ENCODE measurements at regions of chr6 and their contacts with region 1.

Region 1: GRCh38 chr6:148658701-148659100 is 88.1 kb upstream of the UST start:
- DNase-seq: no peak
- H3K4me3 ChIP-seq: no peak overlapping the region
- H3K27ac ChIP-seq: peak overlapping the region; percentile 56 to 83
- H3K4me1 ChIP-seq: peaks cover 0 to 8% of the 10 kb centered on the region in 2 donors
- H3K27me3 ChIP-seq: no peaks in the 10 kb centered on the region
- CTCF ChIP-seq: no peak

Region 2: GRCh38 chr6:148175550-148176188 is 483.0 kb before region 1 on chr6:
- intact Hi-C with region 1: no loop called
- DNase-seq: no peak
- H3K4me3 ChIP-seq: no peak overlapping the region
- H3K27ac ChIP-seq: no peak overlapping the region
- H3K4me1 ChIP-seq: no peaks in the 10 kb centered on the region
- H3K27me3 ChIP-seq: no peaks in the 10 kb centered on the region
- CTCF ChIP-seq: no peak

Region 3: DNA sequence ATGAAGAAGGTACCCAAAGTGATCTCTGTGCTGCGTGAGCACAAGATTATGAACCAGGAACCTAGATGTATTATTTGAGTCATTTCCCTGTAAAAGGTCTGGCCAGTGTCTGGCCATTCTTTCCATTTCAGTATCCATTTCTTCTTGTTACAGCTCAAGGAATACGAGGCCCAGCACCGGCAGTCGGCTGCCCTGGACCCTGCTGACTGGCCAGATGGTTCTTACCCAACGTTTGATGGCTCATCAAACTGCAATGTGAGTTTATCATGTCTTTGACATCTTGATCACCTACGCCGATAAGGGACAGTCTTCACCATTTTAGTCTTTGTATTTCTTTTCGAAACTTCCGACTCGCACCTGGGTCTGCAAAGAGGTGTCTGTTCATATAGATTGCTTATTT is 171.2 kb before region 1 on chr6:
- intact Hi-C with region 1: no loop called
- DNase-seq: no peak
- H3K4me3 ChIP-seq: no peak overlapping the region
- H3K27ac ChIP-seq: no peak overlapping the region
- H3K4me1 ChIP-seq: peaks cover 0 to 6% of the 10 kb centered on the region in 2 donors
- H3K27me3 ChIP-seq: no peaks in the 10 kb centered on the region
- CTCF ChIP-seq: no peak

Region 4: DNA sequence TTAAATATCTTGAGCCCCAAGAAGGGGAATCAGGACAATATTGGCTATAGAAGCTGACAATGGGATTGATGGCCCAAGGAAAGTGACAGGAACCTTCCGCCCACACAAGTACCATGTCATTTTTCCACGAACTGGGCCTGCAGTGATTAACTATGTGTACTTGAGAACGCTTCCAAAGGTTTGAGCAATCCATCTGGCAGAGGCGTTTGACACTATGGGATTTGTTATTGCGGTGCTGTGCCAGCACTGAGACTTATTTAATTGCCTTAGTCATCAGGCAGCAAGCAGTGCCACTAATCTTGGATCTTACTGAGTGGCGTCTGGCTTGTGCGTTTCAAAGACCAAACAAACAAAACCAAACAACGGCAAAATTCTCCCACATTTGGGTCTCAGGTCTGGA is 47.5 kb before region 1 on chr6:
- intact Hi-C with region 1: loop called (anchors 2 kb)
- DNase-seq: peak; percentile 46 to 94
- H3K4me3 ChIP-seq: peak overlapping the region in 1 of 2 donors; percentile 26
- H3K27ac ChIP-seq: peak overlapping the region; percentile 78 to 88
- H3K4me1 ChIP-seq: peaks cover 9 to 16% of the 10 kb centered on the region in 2 donors
- H3K27me3 ChIP-seq: no peaks in the 10 kb centered on the region
- CTCF ChIP-seq: no peak

Region 5: DNA sequence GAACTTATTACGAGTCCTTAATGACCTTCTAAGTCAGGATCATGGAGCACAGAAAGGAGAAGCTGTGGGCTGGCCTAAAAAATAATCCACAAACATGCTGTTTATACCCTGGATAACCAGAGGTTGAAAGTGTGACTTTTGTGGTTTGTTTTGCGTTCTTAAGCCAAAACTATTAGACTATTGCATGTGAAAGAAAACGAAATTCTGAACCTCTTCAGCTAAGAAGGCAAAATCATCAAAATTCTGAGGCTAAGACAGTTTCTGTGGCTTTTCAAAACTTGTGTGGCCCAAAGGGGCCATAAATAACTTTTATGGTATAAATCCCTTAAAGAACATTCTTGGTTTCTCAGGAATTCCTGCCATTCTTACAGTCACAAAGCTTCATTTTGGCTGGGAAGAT is 339.2 kb after region 1 on chr6:
- intact Hi-C with region 1: no loop called
- DNase-seq: no peak
- H3K4me3 ChIP-seq: no peak overlapping the region
- H3K27ac ChIP-seq: peak overlapping the region in 1 of 2 donors; percentile 26
- H3K4me1 ChIP-seq: peaks cover 0 to 24% of the 10 kb centered on the region in 2 donors
- H3K27me3 ChIP-seq: no peaks in the 10 kb centered on the region
- CTCF ChIP-seq: no peak